HEK293T (cell line): ENCODE measurements at regions of chr15 and their contacts with region 1.

Region 1: DNA sequence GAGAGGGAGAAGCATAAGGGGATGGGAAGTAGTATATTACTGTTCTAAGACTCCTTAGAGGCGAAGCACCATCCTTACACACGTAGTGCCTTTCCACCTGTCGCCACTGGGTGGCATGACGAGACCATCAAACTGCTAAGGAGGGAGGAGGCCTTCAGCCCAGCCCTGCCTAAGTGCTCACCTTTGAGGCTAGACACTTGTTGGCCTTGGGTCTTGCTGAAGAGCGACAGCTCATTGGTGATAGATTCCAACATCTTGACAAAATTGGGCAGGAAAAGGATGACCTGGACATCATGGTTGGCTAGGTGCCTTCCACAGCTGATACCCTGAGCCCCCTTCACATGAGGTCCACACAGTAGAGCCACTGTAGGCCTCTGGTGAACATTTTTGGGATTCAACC is 19.6 kb downstream of the CLK3 start:
- DNase-seq: peak; percentile 83

Region 2: GRCh38 chr15:74482661-74483060 is 152.6 kb before region 1 on chr15:
- CTCF ChIA-PET with region 1: interaction called, 11 read pairs
- POLR2A ChIA-PET with region 1: no interaction called
- DNase-seq: no peak

Region 3: DNA sequence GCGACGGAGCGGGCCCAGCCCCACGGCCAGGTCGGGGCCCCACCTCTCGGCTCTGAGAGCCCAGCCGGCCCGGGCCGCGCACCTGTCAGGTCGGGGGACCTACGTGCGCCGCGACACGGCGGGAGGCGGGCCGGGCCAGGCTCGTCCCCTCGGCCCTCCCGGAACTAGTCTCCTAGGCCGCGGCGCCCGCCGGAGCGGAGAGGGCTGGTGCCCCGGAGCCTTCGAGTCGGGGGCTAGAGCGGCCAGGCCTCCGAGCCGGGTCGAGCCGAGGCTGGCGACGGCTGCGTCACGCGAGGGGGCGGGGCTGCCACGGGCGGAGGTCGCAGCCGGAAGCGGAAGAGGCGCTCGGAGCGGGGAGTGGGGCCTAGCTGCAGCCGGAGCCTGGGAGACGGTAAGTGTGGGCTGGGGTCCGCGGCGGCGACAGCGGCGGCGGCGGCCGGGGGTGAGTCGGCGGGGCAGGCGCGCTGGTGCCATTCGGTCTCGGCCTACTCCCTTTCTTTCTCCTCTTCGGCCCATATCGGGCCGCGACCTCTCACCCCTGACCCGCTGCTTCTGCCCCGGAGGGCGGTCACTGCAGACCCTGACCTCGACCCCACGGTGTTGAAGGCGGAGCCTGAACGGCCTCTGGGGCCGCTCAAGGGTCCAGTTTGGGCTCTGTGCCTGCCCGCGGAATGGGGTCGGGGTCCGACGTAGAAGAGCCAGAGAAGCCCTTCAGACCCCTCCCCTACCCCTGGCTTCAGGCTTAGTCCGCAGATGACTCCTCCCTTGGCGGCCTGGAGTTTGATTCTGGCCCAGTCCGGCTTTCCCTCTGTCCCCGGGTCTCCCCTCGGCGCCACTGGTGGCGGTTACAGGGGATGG is 19.5 kb before region 1 on chr15 and contains the start of gene CLK3:
- CTCF ChIA-PET with region 1: interaction called, 26 read pairs
- POLR2A ChIA-PET with region 1: interaction called, 5 read pairs
- DNase-seq: peak; percentile 98

Region 4: DNA sequence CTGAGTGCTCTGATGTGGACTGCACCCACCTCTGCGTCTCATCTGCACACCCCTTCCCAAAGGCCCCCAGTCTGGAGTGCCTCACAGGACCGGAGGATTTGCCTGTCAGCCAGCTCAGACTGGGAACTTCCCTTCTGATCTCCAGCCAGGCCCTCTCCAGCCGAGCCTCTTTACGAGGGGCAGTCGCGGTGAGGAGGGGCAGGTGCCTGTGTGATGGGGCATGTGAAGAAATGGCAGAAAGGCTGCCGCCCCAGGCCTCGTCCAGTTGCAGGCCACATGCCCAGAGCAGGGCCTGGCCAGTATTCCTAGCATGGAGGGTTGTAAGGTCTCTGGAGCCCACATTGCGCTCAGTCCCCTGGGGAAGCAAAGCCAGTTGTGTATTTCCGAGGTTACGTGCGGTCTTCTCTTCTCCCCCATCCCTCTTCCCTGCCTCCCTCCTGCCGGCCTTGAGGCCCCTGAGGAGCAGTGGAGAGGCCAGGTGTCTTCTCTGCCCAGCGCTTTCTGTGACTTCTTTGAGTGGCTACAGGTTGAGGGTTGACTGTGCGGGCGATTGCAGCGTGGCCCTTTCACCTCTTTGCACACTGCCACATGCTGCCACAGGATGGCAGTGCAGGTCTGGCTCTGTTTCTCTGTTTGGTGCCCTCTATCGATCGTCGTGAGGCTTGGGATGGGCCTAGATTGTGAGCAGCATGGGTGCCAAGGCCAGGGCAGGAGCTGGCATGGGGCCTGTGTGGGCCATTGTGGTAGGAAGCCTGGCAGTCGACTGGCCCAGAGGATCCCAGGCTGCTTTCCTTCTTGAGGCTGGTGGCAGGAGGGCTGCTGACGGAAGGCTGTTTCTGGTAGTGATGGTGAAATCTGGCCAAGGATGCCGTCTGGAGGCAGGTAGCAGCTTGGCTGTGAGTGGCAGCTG is 14.3 kb before region 1 on chr15:
- CTCF ChIA-PET with region 1: interaction called, 27 read pairs
- POLR2A ChIA-PET with region 1: interaction called, 5 read pairs
- DNase-seq: peak; percentile 83